Activated CD4-positive, alpha-beta memory T cell treated with anti-CD3 and anti-CD28 coated beads, Interleukin-2, amount 10 ng/mL, durations not matched to agents 7 days and 5 days (primary cell): ENCODE measurements at regions of chr11 and their contacts with region 1.

Region 1: DNA sequence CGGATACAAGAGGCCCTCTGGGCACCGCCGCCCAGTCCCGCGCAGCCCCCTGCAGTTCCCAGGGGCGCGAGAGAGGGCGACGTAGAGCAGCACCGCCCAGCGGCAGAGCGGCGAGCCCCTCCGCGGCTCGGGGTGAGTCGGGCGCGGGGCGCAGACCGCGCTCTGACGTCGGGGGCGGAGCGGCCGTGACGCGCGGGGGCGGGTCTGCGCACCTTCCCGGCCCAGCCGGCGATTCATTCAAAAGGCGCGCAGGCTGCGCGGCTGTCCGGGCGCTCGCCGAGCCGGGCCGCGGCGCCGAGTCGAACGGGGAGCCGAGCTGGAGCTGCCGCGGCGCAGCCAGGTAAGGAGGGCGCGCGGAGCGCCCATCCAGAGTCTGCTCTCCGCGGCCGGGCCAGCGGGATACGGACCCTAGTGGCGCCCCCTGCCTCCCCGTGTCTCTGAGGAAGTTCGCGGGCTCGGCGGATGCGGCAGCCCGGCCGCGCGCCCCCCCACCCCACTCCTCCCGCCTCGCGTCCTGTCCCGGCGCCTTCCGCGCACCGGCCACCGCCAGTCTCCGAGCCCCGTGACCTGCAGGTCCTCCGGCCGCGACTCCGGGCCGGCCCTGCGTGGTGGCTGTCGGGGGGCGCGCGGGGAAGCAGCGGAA is at the start of gene RELT:
- DNase-seq: peak; percentile 95
- H3K4me3 Mint-ChIP-seq: peak within 1 kb of the TSS; percentile 94
- H3K27ac Mint-ChIP-seq: peak within 1 kb of the TSS; percentile 94
- H3K4me1 Mint-ChIP-seq: peaks cover 48% of the 10 kb centered on the region
- H3K27me3 Mint-ChIP-seq: no peaks in the 10 kb centered on the region
- total RNA-seq, gene RELT: 26.0 to 27.3 TPM

Region 2: DNA sequence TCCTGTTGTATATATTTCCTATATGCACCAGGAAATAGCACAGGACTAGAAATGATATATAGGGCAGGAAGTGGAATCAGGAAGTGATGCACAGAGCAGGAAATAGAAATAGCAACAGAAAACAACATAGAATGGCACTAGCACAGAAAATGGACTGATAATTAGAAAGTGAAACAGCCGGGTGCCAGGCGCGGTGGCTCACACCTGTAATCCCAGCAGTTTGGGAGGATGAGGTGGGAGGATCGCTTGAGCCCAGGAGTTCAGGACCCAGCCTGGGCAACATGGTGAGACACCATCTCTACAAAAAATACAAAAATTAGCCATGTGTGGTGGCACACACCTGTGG is 10.0 kb before region 1 on chr11:
- CTCF ChIA-PET with region 1: interaction called, 6 read pairs
- POLR2A ChIA-PET with region 1: interaction called, 12 read pairs
- DNase-seq: peak; percentile 56
- H3K4me3 Mint-ChIP-seq: peak overlapping the region; percentile 59
- H3K27ac Mint-ChIP-seq: peak overlapping the region; percentile 86
- H3K4me1 Mint-ChIP-seq: peaks cover 23% of the 10 kb centered on the region
- H3K27me3 Mint-ChIP-seq: no peaks in the 10 kb centered on the region